AG04450 (cell line): ENCODE measurements at regions of chr10 and their contacts with region 1.

Region 1: DNA sequence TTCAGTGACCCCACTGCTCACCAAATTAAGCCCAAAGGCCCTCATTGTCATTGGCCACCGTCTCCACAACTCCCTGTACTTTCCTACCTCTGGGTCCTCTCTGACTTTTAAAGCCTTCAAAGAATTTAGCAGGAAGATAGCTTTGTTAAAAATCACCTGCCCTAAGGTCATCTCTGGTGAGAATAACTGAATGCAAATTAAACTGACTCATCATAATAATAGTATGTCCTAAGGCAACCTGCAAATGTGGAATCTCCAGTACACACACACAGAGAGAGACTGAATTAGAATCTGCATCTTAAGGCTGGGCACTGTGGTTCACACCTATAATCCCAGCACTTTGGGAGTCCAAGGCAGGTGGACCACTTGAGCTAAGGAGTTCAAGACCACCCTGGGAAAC is 24.1 kb downstream of the OAT start:
- DNase-seq: no peak
- H3K4me3 ChIP-seq: no peak overlapping the region
- H3K27ac ChIP-seq: no peak overlapping the region
- H3K27me3 ChIP-seq: peaks cover 2% of the 10 kb centered on the region
- CTCF ChIP-seq: no peak

Region 2: GRCh38 chr10:123994417-123995081 is 400.0 kb before region 1 on chr10:
- CTCF ChIA-PET with region 1: interaction called, 319 read pairs
- POLR2A ChIA-PET with region 1: interaction called, 4 read pairs
- DNase-seq: peak; percentile 61
- H3K4me3 ChIP-seq: peak overlapping the region; percentile 41
- H3K27ac ChIP-seq: peak overlapping the region; percentile 93
- H3K27me3 ChIP-seq: peaks cover 10% of the 10 kb centered on the region
- CTCF ChIP-seq: peak; percentile 91

Region 3: GRCh38 chr10:124522933-124523871 is 128.6 kb after region 1 on chr10:
- CTCF ChIA-PET with region 1: no interaction called
- POLR2A ChIA-PET with region 1: no interaction called
- DNase-seq: no peak
- H3K4me3 ChIP-seq: peak overlapping the region; percentile 22
- H3K27ac ChIP-seq: no peak overlapping the region
- H3K27me3 ChIP-seq: peaks cover 3% of the 10 kb centered on the region
- CTCF ChIP-seq: no peak